Heart left ventricle (tissue), 16 donors: ENCODE measurements at regions of chr16 and their contacts with region 1.

Region 1: DNA sequence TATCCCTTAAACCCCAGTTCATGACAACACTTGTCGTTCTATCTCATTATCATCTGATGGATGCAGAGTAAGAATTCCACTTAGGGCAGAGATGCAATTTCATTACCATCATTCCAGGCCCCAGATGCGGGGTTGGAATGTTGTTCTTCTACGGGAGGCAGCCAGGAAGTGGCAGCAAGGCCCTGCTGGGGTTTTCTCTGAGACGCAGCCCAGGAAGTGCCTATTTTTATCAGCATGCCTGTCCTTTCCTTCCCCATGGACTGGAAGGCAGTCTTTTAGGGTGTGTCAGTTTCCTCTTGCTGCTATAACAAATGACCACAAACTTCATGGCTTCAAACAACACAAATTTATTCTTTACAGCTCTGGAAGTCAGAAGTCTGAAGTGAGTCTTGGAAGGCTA is 246.6 kb upstream of the DYNLRB2 start:
- DNase-seq: no peak
- ATAC-seq: no peak
- H3K4me3 ChIP-seq: no peak overlapping the region
- H3K27ac ChIP-seq: no peak overlapping the region
- H3K4me1 ChIP-seq: peaks cover 0 to 4% (median 0%) of the 10 kb centered on the region in 12 donors
- H3K27me3 ChIP-seq: peaks cover 0 to 3% (median 0%) of the 10 kb centered on the region in 9 donors
- CTCF ChIP-seq: no peak
- POLR2A ChIP-seq: no peak

Region 2: GRCh38 chr16:79500286-79500685 is 793.9 kb before region 1 on chr16:
- intact Hi-C with region 1: loop called in 1 of 10 experiments (anchors 5 kb)
- DNase-seq: no peak
- ATAC-seq: peak in 1 of 4 donors; percentile 33
- H3K4me3 ChIP-seq: no peak overlapping the region
- H3K27ac ChIP-seq: no peak overlapping the region
- H3K4me1 ChIP-seq: peaks cover 0 to 27% (median 0%) of the 10 kb centered on the region in 12 donors
- H3K27me3 ChIP-seq: no peaks in the 10 kb centered on the region
- CTCF ChIP-seq: no peak
- POLR2A ChIP-seq: no peak